Activated CD4-positive, alpha-beta memory T cell treated with anti-CD3 and anti-CD28 coated beads for 36 hours (primary cell): ENCODE measurements at regions of chr10 and their contacts with region 1.

Region 1: GRCh38 chr10:96586419-96587263 is at the start of gene TM9SF3:
- DNase-seq: peak; percentile 95
- H3K4me3 Mint-ChIP-seq: peak within 1 kb of the TSS; percentile 97
- H3K27ac Mint-ChIP-seq: peak within 1 kb of the TSS; percentile 95
- H3K4me1 Mint-ChIP-seq: peaks cover 33% of the 10 kb centered on the region
- H3K27me3 Mint-ChIP-seq: peaks cover 6% of the 10 kb centered on the region
- total RNA-seq, gene TM9SF3: 75.6 to 79.7 TPM

Region 2: GRCh38 chr10:95656291-95657164 is 930.1 kb before region 1 on chr10 and contains the start of gene ALDH18A1:
- CTCF ChIA-PET with region 1: no interaction called
- POLR2A ChIA-PET with region 1: no interaction called
- intact Hi-C with region 1: loop called (anchors 10 kb)
- DNase-seq: peak; percentile 93
- H3K4me3 Mint-ChIP-seq: peak within 1 kb of the TSS; percentile 91
- H3K27ac Mint-ChIP-seq: peak within 1 kb of the TSS; percentile 80
- H3K4me1 Mint-ChIP-seq: peaks cover 25% of the 10 kb centered on the region
- H3K27me3 Mint-ChIP-seq: no peaks in the 10 kb centered on the region
- total RNA-seq, gene ALDH18A1: 68.6 to 69.5 TPM

Region 3: GRCh38 chr10:96513698-96514561 is 72.7 kb before region 1 on chr10 and contains the start of gene TLL2:
- CTCF ChIA-PET with region 1: interaction called, 5 read pairs
- POLR2A ChIA-PET with region 1: interaction called, 3 read pairs
- intact Hi-C with region 1: loop called (anchors 2 kb)
- DNase-seq: peak; percentile 77
- H3K4me3 Mint-ChIP-seq: peak within 1 kb of the TSS; percentile 57
- H3K27ac Mint-ChIP-seq: no peak within 1 kb of the TSS
- H3K4me1 Mint-ChIP-seq: peaks cover 20% of the 10 kb centered on the region
- H3K27me3 Mint-ChIP-seq: peaks cover 25% of the 10 kb centered on the region
- total RNA-seq, gene TLL2: 0.05 TPM in 1 of 2 experiments, not detected in the other

Region 4: GRCh38 chr10:96719850-96720421 is 133.3 kb after region 1 on chr10:
- CTCF ChIA-PET with region 1: no interaction called
- POLR2A ChIA-PET with region 1: no interaction called
- intact Hi-C with region 1: loop called (anchors 5 kb)
- DNase-seq: peak; percentile 69
- H3K4me3 Mint-ChIP-seq: peak overlapping the region; percentile 89
- H3K27ac Mint-ChIP-seq: no peak overlapping the region
- H3K4me1 Mint-ChIP-seq: peaks cover 12% of the 10 kb centered on the region
- H3K27me3 Mint-ChIP-seq: peaks cover 1% of the 10 kb centered on the region

Region 5: GRCh38 chr10:96978621-96979154 is 392.0 kb after region 1 on chr10:
- CTCF ChIA-PET with region 1: no interaction called
- POLR2A ChIA-PET with region 1: no interaction called
- intact Hi-C with region 1: loop called (anchors 1 kb)
- DNase-seq: no peak
- H3K4me3 Mint-ChIP-seq: peak overlapping the region; percentile 6
- H3K27ac Mint-ChIP-seq: peak overlapping the region; percentile 77
- H3K4me1 Mint-ChIP-seq: peaks cover 24% of the 10 kb centered on the region
- H3K27me3 Mint-ChIP-seq: no peaks in the 10 kb centered on the region

Region 6: GRCh38 chr10:97425964-97426775 is 839.5 kb after region 1 on chr10 and contains the start of gene PGAM1:
- CTCF ChIA-PET with region 1: no interaction called
- POLR2A ChIA-PET with region 1: no interaction called
- intact Hi-C with region 1: loop called (anchors 5 kb)
- DNase-seq: peak; percentile 97
- H3K4me3 Mint-ChIP-seq: peak within 1 kb of the TSS; percentile 93
- H3K27ac Mint-ChIP-seq: peak within 1 kb of the TSS; percentile 98
- H3K4me1 Mint-ChIP-seq: peaks cover 47% of the 10 kb centered on the region
- H3K27me3 Mint-ChIP-seq: peaks cover 2% of the 10 kb centered on the region
- total RNA-seq, gene PGAM1: 1,430 to 1,457 TPM